ENCODE measurements at regions of chr5 and their contacts with region 1.

Region 1: DNA sequence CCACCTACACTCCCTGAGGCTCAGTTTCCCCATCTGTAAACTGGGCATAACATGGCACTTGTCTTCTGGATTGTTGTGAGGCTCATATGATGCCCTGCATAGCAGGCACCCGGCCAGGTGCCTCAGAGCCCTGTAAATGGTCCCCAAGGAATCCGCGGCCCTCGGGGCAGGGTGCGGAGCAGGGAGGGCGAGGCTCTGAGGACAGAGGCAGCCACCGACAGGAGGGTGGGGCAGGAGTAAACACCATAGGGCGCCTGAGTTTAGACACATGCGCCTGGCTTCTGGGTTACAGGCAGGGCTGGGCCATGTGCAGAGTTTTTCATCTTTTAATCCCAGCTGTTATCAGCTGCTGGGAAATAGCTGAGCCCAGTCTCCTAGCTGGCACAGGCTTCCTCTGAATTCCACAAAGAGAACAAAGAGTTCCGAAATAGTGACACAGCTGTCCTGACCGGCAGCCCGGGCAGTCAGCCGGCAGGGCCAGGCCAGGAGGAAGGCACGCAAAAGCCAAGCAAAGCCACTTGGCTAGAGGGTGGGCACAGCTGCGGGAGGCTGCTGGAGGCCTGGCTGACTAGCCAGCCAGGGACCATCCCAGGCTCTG is 98.9 kb upstream of the PHYKPL start:
- DNase-seq: peak; percentile 52 to 93 (median 90)
- H3K4me3 ChIP-seq: peak overlapping the region in 3 of 59 donors; percentile 3 to 20 (median 18)
- H3K27ac ChIP-seq: peak overlapping the region in 58 of 59 donors; percentile 74 to 99 (median 94)
- H3K27me3 ChIP-seq: no peaks in the 10 kb centered on the region
- CTCF ChIP-seq: peak in 14 of 56 donors; percentile 9 to 36 (median 18)

Region 2: GRCh38 chr5:178259623-178260536 is 71.6 kb before region 1 on chr5:
- intact Hi-C with region 1: no loop called
- DNase-seq: no peak
- H3K4me3 ChIP-seq: no peak overlapping the region
- H3K27ac ChIP-seq: no peak overlapping the region
- H3K27me3 ChIP-seq: no peaks in the 10 kb centered on the region
- CTCF ChIP-seq: no peak

Region 3: DNA sequence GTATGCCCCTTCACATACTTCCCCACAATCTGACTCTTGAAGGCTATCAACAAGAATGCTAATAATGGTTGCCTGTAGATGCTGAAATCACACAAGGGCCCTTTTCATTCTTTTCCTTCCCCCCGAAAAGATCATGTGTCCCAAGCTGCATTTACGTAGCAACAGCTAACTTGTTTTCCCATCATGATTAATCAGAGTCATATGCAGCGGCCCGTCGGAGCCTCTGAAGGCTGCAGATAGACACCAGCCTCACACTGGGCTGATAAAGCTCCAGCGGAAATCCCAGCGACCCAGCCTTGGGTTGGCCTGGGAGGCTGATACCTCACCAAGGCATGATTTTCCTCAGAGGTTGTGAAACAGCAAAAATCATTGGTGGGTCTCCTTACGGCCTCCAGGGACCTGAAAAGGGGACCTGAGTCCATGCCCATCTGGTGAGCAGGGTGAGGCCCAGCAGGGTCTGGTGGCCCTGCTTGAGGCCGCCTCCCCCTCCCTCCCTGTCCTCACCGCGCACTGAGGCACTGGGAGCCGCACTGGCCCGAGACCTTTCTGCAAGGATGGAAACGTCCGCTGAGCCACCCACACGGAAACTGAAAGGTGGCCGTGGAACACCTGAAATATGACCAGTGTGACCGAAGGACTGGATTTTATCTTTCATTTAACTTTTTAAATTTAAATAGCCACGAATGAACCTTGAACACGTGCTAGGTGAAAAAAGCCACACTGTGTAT is 15.3 kb after region 1 on chr5:
- intact Hi-C with region 1: loop called in 1 of 2 experiments (anchors 2 kb)
- DNase-seq: peak in 7 of 10 donors; percentile 47 to 79 (median 58)
- H3K4me3 ChIP-seq: peak overlapping the region in 1 of 59 donors; percentile 2
- H3K27ac ChIP-seq: peak overlapping the region; percentile 5 to 99 (median 93)
- H3K27me3 ChIP-seq: peaks cover 0 to 3% (median 0%) of the 10 kb centered on the region in 45 donors
- CTCF ChIP-seq: peak in 5 of 56 donors; percentile 7 to 20 (median 9)

Region 4: GRCh38 chr5:178453224-178453623 is 121.7 kb after region 1 on chr5:
- intact Hi-C with region 1: loop called in 1 of 2 experiments (anchors 5 kb)
- DNase-seq: no peak
- H3K4me3 ChIP-seq: no peak overlapping the region
- H3K27ac ChIP-seq: no peak overlapping the region
- H3K27me3 ChIP-seq: peaks cover 0 to 3% (median 0%) of the 10 kb centered on the region in 45 donors
- CTCF ChIP-seq: no peak

Region 5: DNA sequence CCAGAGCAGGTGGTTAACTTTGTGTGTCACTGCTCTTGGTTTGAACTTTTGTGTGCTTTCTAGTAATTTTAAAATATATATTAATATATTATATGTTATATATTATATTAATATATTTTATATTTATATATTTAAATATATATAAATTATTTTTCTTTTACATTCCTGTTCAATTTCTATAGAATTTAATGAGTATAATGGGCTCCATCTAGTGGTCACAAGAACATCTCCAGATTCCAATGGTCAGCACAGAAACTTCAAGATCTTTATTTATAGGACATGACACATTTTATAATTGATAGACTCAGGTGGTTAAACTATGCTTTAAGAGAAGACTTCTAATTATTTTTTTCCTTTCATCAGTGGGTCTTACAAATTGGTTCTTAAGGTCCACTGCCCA is 219.6 kb after region 1 on chr5:
- intact Hi-C with region 1: no loop called
- DNase-seq: no peak
- H3K4me3 ChIP-seq: no peak overlapping the region
- H3K27ac ChIP-seq: no peak overlapping the region
- H3K27me3 ChIP-seq: no peaks in the 10 kb centered on the region
- CTCF ChIP-seq: peak in 55 of 56 donors; percentile 25 to 79 (median 62)

Measured in dorsolateral prefrontal cortex (tissue), 120 donors.